OCI-LY7 (cell line): ENCODE measurements at regions of chr12 and their contacts with region 1.

Region 1: DNA sequence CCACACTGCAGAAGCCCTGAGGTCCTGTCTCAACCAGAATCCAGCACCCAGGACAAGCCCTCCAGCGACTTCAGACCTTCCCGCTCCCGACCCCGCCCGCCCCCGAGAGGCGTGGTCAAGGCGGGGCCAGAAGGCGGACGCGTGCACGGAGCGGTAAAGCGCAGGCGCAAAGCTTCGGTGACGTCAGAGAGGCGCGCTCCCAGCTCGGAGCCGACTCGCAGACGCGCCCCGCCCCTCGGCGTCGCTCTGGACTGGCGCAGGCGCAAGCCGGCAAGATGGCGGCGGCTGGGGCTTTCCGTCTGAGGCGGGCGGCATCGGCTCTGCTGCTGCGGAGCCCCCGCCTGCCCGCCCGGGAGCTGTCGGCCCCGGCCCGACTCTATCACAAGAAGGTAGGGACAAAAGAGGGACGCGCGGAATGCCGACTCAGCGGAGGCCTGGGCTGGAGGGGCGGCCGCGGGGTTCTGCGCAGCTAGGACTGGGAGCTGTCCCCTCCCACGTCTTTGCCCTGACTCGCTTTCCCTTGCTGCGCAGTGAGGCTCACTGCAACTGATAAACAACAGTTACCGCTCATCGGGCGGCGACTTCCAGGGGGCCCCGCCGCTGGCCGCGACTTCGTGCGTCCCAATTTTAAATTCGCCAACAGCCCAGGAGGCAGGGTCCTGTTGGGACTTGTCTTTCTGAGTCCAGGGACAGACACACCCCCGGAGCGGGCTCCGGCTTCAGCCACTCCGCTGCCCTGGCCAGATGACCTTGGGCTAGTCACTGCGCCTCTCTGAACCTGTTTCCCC is at the start of gene ISCU:
- DNase-seq: peak; percentile 99
- H3K4me3 ChIP-seq: peak within 1 kb of the TSS; percentile 79
- H3K27ac ChIP-seq: peak within 1 kb of the TSS; percentile 82
- H3K4me1 ChIP-seq: peaks cover 59% of the 10 kb centered on the region
- CTCF ChIP-seq: no peak
- total RNA-seq, gene ISCU: 137 and 146 TPM in 2 replicates

Region 2: GRCh38 chr12:108525681-108526080 is 36.9 kb before region 1 on chr12:
- CTCF ChIA-PET with region 1: no interaction called
- POLR2A ChIA-PET with region 1: no interaction called
- intact Hi-C with region 1: no loop called
- DNase-seq: no peak
- H3K4me3 ChIP-seq: no peak overlapping the region
- H3K27ac ChIP-seq: no peak overlapping the region
- H3K4me1 ChIP-seq: no peaks in the 10 kb centered on the region
- CTCF ChIP-seq: no peak

Region 3: GRCh38 chr12:108542320-108542719 is 20.2 kb before region 1 on chr12:
- CTCF ChIA-PET with region 1: interaction called, 4 read pairs
- POLR2A ChIA-PET with region 1: interaction called, 12 read pairs
- intact Hi-C with region 1: loop called (anchors 1 kb)
- DNase-seq: no peak
- H3K4me3 ChIP-seq: peak overlapping the region; percentile 55
- H3K27ac ChIP-seq: peak overlapping the region; percentile 95
- H3K4me1 ChIP-seq: peaks cover 43% of the 10 kb centered on the region
- CTCF ChIP-seq: no peak

Region 4: GRCh38 chr12:108618079-108618952 is 55.8 kb after region 1 on chr12:
- CTCF ChIA-PET with region 1: interaction called, 10 read pairs
- POLR2A ChIA-PET with region 1: interaction called, 47 read pairs
- intact Hi-C with region 1: loop called (anchors 1 kb)
- DNase-seq: peak; percentile 88
- H3K4me3 ChIP-seq: no peak overlapping the region
- H3K27ac ChIP-seq: peak overlapping the region; percentile 61
- H3K4me1 ChIP-seq: peaks cover 37% of the 10 kb centered on the region
- CTCF ChIP-seq: peak; percentile 100

Region 5: GRCh38 chr12:108664338-108665258 is 102.1 kb after region 1 on chr12:
- CTCF ChIA-PET with region 1: no interaction called
- POLR2A ChIA-PET with region 1: interaction called, 10 read pairs
- intact Hi-C with region 1: loop called (anchors 1 kb)
- DNase-seq: peak; percentile 92
- H3K4me3 ChIP-seq: peak overlapping the region; percentile 46
- H3K27ac ChIP-seq: peak overlapping the region; percentile 94
- H3K4me1 ChIP-seq: peaks cover 83% of the 10 kb centered on the region
- CTCF ChIP-seq: peak; percentile 99

Region 6: GRCh38 chr12:108803428-108804105 is 241.0 kb after region 1 on chr12:
- CTCF ChIA-PET with region 1: no interaction called
- POLR2A ChIA-PET with region 1: interaction called, 3 read pairs
- intact Hi-C with region 1: loop called (anchors 1 kb)
- DNase-seq: peak; percentile 84
- H3K4me3 ChIP-seq: no peak overlapping the region
- H3K27ac ChIP-seq: no peak overlapping the region
- H3K4me1 ChIP-seq: peaks cover 25% of the 10 kb centered on the region
- CTCF ChIP-seq: peak; percentile 99

Region 7: GRCh38 chr12:108950991-108951739 is 388.6 kb after region 1 on chr12:
- CTCF ChIA-PET with region 1: no interaction called
- POLR2A ChIA-PET with region 1: no interaction called
- intact Hi-C with region 1: loop called (anchors 1 kb)
- DNase-seq: peak; percentile 83
- H3K4me3 ChIP-seq: no peak overlapping the region
- H3K27ac ChIP-seq: no peak overlapping the region
- H3K4me1 ChIP-seq: peaks cover 20% of the 10 kb centered on the region
- CTCF ChIP-seq: peak; percentile 99

Region 8: DNA sequence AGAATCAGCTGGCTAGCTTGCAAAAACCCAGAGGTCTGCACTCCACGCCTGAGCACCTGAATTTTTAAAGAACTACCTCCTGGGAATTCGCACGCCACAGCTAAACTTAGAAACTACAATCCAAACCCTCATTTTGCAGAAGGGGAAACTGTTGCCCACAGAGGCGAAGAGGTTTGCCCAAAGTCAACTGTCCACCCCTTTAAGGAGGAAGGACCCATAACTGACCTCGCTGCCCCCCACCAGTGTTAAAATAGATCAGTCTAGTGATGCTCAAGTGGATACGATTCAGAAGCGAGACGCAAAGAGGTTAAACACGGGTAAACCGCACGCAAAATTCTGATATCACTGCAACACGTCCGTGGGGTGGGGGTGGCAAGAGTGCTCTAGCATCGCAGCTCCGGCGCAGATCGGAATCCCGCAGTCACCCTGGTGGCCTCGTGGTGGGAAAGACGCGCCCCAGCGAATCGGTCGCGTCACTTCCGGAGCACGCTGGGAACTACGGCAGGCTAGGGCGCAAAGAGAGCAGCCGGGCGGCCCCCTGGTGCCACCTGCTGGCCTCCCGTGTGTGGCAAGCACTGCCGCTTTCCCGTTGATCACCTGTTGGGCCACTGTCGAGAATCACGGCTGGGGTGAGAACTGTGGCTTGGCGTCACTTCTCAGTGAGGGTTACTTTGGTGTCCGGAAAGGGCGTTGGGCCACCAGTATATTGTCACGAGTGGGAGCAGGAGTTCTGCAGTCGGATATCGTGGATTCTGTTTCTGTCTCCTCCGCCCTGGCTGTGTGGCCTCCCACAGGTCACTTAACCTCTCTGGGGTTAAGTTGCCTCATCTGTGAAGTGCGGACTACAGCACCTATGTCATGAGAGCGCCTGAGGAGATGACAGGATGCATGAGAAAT is 530.7 kb after region 1 on chr12 and contains the start of gene ALKBH2:
- CTCF ChIA-PET with region 1: no interaction called
- POLR2A ChIA-PET with region 1: interaction called, 4 read pairs
- intact Hi-C with region 1: loop called (anchors 2 kb)
- DNase-seq: peak; percentile 96
- H3K4me3 ChIP-seq: peak within 1 kb of the TSS; percentile 84
- H3K27ac ChIP-seq: peak within 1 kb of the TSS; percentile 63
- H3K4me1 ChIP-seq: peaks cover 62% of the 10 kb centered on the region
- CTCF ChIP-seq: peak; percentile 89
- total RNA-seq, gene ALKBH2: 70.3 and 76.8 TPM in 2 replicates